Esophagus squamous epithelium (tissue), 5 donors: ENCODE measurements at regions of chr16 and their contacts with region 1.

Region 1: DNA sequence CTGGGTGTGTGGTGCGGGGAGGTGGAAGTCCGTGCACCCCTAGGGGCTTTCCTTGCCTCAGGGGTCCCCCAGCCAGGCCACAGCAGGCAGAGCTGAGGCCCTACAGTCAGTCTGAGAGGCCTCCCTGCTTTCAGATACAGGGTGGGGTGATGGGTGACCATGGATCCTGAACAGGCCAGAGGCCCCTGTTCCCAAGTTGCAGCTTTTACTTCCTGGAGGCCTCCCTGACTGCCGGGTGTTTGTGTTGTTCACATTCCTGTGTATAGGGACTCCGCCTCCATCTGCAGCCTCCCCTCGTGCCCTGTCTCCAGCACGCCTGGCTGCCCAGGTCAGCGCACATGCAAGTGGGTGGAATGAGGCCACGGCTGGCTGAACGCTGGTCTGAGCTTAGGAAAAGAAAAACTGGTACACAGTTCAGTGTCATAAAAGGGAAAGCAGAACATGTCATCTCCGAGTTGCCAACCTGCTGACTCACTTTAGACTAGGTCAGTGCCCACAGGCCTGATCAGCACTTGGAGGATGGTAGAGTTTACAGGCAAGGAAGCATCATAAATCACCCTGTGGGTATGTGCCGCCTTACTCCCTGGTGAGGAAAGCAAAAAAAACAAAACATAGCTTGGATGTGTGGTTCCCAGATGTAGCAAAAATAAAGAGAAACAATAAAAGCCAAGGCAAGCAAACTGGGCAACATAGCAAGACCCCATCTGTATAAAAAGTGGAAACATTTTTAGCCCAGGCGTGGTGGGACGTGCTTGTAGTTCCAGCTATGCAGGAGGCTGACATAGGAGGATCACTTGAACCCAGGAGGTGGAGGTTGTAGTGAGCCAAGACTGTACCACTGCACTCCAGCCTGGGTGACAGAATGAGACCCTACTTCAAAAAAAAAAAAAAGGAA is 6.2 kb upstream of the SLC7A6 start:
- DNase-seq: no peak
- H3K4me3 ChIP-seq: no peak overlapping the region
- H3K27ac ChIP-seq: peak overlapping the region; percentile 38 to 78 (median 50)
- H3K4me1 ChIP-seq: peaks cover 3 to 22% (median 8%) of the 10 kb centered on the region in 3 donors
- H3K27me3 ChIP-seq: no peaks in the 10 kb centered on the region
- CTCF ChIP-seq: no peak
- POLR2A ChIP-seq: no peak

Region 2: GRCh38 chr16:68310761-68311511 is 52.8 kb after region 1 on chr16 and contains the starts of genes PRMT7 and SLC7A6OS:
- intact Hi-C with region 1: loop called (anchors 10 kb)
- DNase-seq: peak; percentile 80
- H3K4me3 ChIP-seq: peak within 1 kb of the TSS; percentile 67 to 98 (median 78)
- H3K27ac ChIP-seq: peak within 1 kb of the TSS; percentile 81 to 89 (median 87)
- H3K4me1 ChIP-seq: peaks cover 16 to 50% (median 28%) of the 10 kb centered on the region in 3 donors
- H3K27me3 ChIP-seq: no peaks in the 10 kb centered on the region
- CTCF ChIP-seq: peak in 3 of 6 experiments; percentile 4 to 69 (median 45)
- POLR2A ChIP-seq: peak in 3 of 4 donors; percentile 58 to 77 (median 68)
- total RNA-seq, gene PRMT7: 15.2 to 35.7 (median 21.2) TPM
- total RNA-seq, gene SLC7A6OS: 4.5 to 16.2 (median 6.7) TPM

Region 3: DNA sequence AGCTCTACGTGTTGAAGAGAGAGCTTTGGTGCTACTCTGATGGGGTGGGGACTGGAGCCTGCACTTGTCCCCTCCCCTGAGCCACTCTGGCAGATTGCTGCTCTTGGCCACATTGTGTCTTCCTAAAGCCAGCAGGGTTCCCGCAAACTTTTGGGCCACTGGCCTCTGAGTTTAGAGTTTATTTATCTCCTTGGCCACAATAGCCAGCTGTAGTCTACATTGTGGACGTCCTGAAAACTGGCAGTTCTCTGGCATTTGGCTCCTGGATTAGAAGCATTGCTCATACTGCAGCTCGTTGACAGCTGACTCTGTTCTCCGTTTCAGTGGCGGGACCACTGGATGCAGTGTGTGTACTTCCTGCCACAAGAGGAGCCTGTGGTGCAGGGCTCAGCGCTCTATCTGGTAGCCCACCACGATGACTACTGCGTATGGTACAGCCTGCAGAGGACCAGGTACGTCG is 87.2 kb after region 1 on chr16:
- intact Hi-C with region 1: no loop called
- DNase-seq: no peak
- H3K4me3 ChIP-seq: no peak overlapping the region
- H3K27ac ChIP-seq: no peak overlapping the region
- H3K4me1 ChIP-seq: no peaks in the 10 kb centered on the region
- H3K27me3 ChIP-seq: no peaks in the 10 kb centered on the region
- CTCF ChIP-seq: no peak
- POLR2A ChIP-seq: no peak